Gastrocnemius medialis (tissue), 4 donors: ENCODE measurements at regions of chr19 and their contacts with region 1.

Region 1: DNA sequence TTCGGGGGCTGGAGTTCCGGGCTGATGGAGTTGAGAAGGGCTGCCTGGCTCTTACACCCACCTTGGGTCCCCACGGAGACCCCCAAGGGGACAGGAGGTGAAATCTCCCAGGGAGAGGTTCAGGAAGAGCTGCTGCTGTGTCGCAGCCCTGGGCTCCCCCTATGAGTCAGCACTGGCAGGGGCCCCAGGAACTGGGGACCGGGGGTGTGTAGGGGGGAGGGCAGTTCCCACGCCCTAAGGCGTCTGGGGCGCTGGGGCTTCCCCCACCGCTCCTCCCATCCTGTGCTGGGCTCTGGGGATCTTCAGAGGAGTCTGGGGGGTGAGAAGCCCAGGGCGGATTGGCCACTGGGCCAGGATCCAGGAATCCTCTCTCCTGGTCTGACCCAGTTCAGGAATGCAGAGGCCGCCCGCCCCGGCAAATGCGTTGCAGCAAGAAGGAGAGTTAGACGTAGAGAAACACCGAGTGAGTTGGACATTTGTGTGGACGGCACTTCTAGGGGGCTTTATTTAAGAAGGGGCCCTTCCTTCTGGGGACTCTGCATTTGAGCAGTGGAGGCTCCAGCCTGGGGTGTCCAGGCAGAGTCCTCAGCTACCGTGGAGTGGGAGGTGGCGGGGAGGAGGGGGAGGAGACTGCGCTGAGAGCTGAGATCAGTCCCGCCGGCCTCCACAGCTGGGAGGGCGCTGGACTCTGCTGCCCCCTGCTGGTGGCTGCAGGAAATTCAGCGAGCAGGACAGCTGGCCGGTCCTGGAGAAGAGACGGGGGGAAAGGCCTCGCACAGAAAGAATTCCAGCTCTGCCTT is 15.0 kb upstream of the NANOS3 start:
- DNase-seq: peak; percentile 87 to 91
- ATAC-seq: peak; percentile 95 to 97
- H3K4me3 ChIP-seq: peak overlapping the region; percentile 47 to 69 (median 62)
- H3K27ac ChIP-seq: peak overlapping the region; percentile 80 to 87 (median 86)
- H3K4me1 ChIP-seq: peaks cover 7 to 18% of the 10 kb centered on the region in 2 donors
- H3K27me3 ChIP-seq: peaks cover 5 to 9% (median 9%) of the 10 kb centered on the region in 3 donors
- CTCF ChIP-seq: peak; percentile 97 to 99 (median 98)
- POLR2A ChIP-seq: peak; percentile 15 to 44

Region 2: DNA sequence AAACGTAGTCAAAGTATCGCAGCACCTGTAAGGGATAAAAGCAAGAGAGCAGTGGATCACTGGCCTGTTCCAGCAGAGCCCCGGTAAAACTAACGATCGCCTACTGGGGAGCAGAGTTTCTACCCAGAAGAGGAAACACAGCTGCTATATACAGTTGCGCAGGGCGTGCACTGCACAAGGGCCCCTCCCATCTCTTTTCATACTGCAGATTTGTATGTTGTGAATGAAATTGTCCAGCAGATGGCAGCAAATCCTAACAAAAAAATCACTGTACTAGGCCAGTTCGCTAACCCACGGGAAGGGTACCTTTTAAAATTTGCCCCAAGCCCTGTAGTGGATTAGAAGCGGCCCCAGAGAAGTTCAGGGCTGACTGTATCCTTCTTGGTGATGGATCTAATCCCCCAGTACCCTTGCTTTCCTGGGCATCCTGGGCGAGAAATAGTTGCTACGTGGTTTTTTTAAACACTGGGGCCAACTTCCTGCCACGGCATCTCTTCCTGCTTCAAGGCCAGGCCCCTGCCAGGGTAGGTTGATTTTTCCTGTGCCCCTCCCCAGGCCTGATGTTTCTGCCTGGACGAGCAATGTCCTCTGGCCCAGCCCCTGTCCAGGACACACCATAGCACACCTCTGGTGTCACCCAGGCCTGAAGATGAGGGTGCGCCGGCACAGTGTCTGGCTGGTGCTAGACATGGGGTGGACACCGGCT is 584.7 kb before region 1 on chr19:
- in situ Hi-C with region 1: loop called in 2 of 4 experiments (anchors 25 kb)
- intact Hi-C with region 1: no loop called
- DNase-seq: peak in 1 of 2 donors; percentile 15
- ATAC-seq: peak; percentile 89 to 91
- H3K4me3 ChIP-seq: no peak overlapping the region
- H3K27ac ChIP-seq: no peak overlapping the region
- H3K4me1 ChIP-seq: no peaks in the 10 kb centered on the region
- H3K27me3 ChIP-seq: no peaks in the 10 kb centered on the region
- CTCF ChIP-seq: peak; percentile 56 to 75 (median 65)
- POLR2A ChIP-seq: no peak

Region 3: GRCh38 chr19:13621413-13621812 is 240.5 kb before region 1 on chr19:
- in situ Hi-C with region 1: loop called in 1 of 4 experiments (anchors 25 kb)
- intact Hi-C with region 1: no loop called
- DNase-seq: no peak
- ATAC-seq: no peak
- H3K4me3 ChIP-seq: no peak overlapping the region
- H3K27ac ChIP-seq: no peak overlapping the region
- H3K4me1 ChIP-seq: no peaks in the 10 kb centered on the region
- H3K27me3 ChIP-seq: peaks cover 0 to 15% (median 0%) of the 10 kb centered on the region in 3 donors
- CTCF ChIP-seq: no peak
- POLR2A ChIP-seq: no peak

Region 4: GRCh38 chr19:13774217-13775191 is 87.4 kb before region 1 on chr19 and contains the start of gene C19orf53:
- in situ Hi-C with region 1: loop called in 1 of 4 experiments (anchors 10 kb)
- intact Hi-C with region 1: no loop called
- DNase-seq: peak; percentile 86 to 89
- ATAC-seq: peak; percentile 100
- H3K4me3 ChIP-seq: peak within 1 kb of the TSS; percentile 84 to 100 (median 100)
- H3K27ac ChIP-seq: peak within 1 kb of the TSS; percentile 84 to 97 (median 96)
- H3K4me1 ChIP-seq: peaks cover 14% of the 10 kb centered on the region in 2 donors
- H3K27me3 ChIP-seq: no peaks in the 10 kb centered on the region
- CTCF ChIP-seq: peak in 1 of 5 experiments; percentile 22
- POLR2A ChIP-seq: peak; percentile 72 to 89
- total RNA-seq, gene C19orf53: 158 to 283 (median 222) TPM

Region 5: DNA sequence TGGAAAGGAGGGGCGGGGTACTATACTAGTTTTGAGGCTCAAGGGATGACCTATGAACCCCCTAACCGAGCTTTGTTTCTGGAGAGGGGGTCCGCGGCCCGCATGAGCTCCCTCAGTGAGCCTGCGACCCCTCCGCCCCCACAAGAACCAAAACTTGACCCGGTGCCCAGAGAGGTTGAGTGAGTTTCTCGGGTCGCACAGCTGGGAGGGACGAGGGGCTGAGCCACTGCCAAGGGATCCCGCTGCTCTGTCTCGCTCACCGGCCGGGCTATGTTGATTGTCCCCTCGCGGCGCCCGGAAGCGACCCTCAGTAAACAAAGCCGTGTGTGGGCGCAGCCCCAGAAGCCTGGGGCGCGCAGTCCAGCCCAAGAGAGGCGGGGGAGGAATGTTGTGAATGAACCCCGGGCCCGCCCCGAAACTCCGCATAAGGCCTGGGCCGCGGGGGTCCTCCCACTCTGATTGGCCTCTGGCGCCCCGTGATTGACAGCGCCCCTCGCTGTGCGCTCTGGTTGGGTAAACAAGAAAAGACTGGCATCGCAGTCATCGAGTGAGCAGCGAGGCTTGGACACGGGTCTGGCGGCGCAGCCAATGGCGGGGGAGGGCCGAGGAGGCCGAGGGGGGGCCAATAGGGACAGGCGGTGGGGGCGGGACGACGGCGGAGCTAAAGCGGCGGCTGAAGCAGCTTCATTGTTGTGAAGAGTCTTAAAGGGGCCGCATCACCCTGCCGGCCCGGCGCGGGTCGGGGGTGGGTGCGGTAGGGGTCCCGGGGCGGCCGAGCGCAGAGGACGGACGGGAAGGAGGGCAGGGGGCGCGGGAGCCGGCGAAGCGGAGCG is 67.0 kb before region 1 on chr19 and contains the start of gene ZSWIM4:
- in situ Hi-C with region 1: loop called in 1 of 4 experiments (anchors 5 kb)
- intact Hi-C with region 1: no loop called
- DNase-seq: peak; percentile 99
- ATAC-seq: peak; percentile 95 to 96
- H3K4me3 ChIP-seq: peak within 1 kb of the TSS; percentile 64 to 96 (median 78)
- H3K27ac ChIP-seq: peak within 1 kb of the TSS; percentile 79 to 96 (median 90)
- H3K4me1 ChIP-seq: peaks cover 24 to 26% of the 10 kb centered on the region in 2 donors
- H3K27me3 ChIP-seq: no peaks in the 10 kb centered on the region
- CTCF ChIP-seq: no peak
- POLR2A ChIP-seq: peak; percentile 57 to 84
- total RNA-seq, gene ZSWIM4: 3.9 to 6.3 (median 5.0) TPM